ENCODE measurements at regions of chr14 and their contacts with region 1.

Region 1: GRCh38 chr14:22929104-22929847 is at the start of gene PRMT5:
- DNase-seq: peak; percentile 99
- H3K4me3 Mint-ChIP-seq: no peak within 1 kb of the TSS
- H3K27ac Mint-ChIP-seq: no peak within 1 kb of the TSS
- H3K4me1 Mint-ChIP-seq: peaks cover 25% of the 10 kb centered on the region
- H3K27me3 Mint-ChIP-seq: no peaks in the 10 kb centered on the region
- total RNA-seq, gene PRMT5: 198 and 200 TPM in 2 replicates

Region 2: DNA sequence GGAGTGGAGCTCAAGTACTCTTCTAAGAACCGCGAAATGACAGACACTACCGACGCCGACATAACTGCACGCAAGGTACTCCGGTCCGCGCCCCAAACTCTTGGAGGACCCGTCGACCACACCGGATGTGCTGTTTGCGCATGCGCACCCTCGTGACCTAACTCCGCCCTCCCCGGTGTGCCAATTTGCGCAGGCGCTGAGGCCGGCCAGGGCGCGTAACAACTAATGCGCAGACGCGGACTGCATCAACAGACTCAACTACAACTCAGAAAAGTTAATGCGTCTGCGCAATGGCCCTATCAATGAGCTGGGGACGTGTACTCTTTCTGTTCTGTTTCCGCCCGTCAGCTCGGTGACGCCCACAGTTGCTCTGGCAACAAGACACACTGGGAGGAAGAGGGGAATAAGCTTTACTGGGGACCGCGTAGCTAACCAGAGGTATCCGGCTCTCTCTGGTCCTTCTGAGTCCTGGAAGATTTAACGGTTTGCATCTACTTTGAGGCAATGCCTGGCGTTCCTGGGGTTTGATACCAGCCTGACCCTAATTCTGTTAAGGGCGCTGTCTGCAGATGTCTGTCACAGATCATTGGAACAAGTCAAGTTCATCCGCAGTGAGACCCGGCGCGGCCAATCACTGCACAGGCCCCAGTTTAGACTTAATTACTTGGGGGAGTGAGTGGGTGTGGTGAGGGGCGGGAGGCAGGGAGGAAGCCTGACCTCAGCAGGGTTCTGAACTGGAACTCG is 340.0 kb before region 1 on chr14 and contains the start of gene DAD1:
- intact Hi-C with region 1: loop called (anchors 1 kb)
- DNase-seq: peak; percentile 100
- H3K4me3 Mint-ChIP-seq: peak within 1 kb of the TSS; percentile 87
- H3K27ac Mint-ChIP-seq: peak within 1 kb of the TSS; percentile 99
- H3K4me1 Mint-ChIP-seq: peaks cover 49% of the 10 kb centered on the region
- H3K27me3 Mint-ChIP-seq: peaks cover 10% of the 10 kb centered on the region
- total RNA-seq, gene DAD1: 255 and 266 TPM in 2 replicates

Region 3: GRCh38 chr14:22918804-22919600 is 10.3 kb before region 1 on chr14 and contains the start of gene RBM23:
- intact Hi-C with region 1: loop called (anchors 1 kb)
- DNase-seq: peak; percentile 100
- H3K4me3 Mint-ChIP-seq: peak within 1 kb of the TSS; percentile 95
- H3K27ac Mint-ChIP-seq: peak within 1 kb of the TSS; percentile 100
- H3K4me1 Mint-ChIP-seq: peaks cover 27% of the 10 kb centered on the region
- H3K27me3 Mint-ChIP-seq: peaks cover 2% of the 10 kb centered on the region
- total RNA-seq, gene RBM23: 82.7 and 90.2 TPM in 2 replicates

Region 4: GRCh38 chr14:22973217-22974032 is 44.1 kb after region 1 on chr14:
- intact Hi-C with region 1: no loop called
- DNase-seq: peak; percentile 84
- H3K4me3 Mint-ChIP-seq: no peak overlapping the region
- H3K27ac Mint-ChIP-seq: no peak overlapping the region
- H3K4me1 Mint-ChIP-seq: no peaks in the 10 kb centered on the region
- H3K27me3 Mint-ChIP-seq: peaks cover 11% of the 10 kb centered on the region

Region 5: DNA sequence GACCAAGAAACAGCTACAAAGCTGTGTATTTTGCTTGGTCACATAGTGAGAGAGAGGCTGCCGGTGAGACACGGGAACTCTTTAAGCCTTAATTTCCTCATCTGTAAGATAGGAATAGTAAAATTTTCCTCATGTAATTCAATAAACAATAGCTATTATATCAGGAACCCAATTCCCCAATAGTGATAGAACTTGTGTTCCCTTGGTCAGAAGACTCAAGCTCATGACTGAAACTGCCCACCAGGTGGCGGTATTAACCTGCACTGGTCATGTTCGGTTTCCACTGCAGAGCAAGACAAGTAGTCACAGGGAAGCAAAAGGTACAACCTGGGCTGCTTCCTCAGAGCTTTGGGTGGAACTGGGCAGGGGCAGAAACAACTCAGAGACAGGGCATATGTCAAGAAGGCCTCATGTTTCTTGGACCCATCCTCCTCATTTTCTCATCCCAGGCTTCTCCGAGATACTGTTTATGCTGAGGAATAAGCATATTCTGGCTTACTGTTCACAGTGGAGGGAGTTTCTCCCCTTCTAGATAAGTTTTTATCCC is 57.3 kb after region 1 on chr14:
- intact Hi-C with region 1: loop called (anchors 1 kb)
- DNase-seq: peak; percentile 96
- H3K4me3 Mint-ChIP-seq: no peak overlapping the region
- H3K27ac Mint-ChIP-seq: no peak overlapping the region
- H3K4me1 Mint-ChIP-seq: no peaks in the 10 kb centered on the region
- H3K27me3 Mint-ChIP-seq: no peaks in the 10 kb centered on the region

Region 6: DNA sequence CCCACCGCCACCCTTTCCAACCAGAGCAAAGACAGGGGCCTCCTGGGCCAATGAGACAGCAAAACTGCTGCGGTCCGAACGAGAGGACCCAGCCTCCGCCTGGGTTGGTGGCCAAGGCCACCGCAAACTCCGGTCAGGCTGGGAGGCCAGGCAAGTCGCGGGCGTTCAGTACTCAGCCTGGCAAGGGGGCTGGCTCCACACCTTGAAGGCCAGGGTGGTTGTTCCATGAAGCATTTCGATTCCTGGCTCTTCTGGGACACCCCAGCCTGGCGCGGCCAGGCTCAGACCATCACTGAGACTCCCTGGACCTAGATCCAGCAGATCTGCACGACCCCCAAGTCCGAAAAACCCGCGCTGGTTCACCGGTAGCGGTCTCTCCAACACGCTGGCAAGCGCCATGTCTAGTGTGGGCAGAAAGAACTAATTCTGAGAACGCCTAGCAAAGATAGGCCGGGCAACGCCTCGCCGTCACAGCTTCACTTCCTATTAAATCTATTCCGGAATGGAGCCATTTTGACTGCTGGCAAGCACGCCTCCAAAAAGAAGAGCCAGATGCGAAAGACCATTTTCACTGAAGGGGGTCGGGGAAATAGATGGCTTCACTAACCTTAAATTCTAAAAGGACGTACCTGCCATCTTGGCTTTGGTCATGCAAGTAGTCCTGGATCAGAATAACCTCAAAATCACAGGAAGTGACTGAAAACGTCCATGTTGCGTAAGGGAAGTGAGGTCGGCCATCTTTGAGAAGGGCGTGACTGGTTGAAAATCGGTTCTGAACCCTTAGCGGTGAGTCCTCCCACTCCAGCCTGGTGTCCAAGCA is 105.4 kb after region 1 on chr14 and contains the start of gene PSMB5:
- intact Hi-C with region 1: loop called (anchors 2 kb)
- DNase-seq: peak; percentile 96
- H3K4me3 Mint-ChIP-seq: peak within 1 kb of the TSS; percentile 81
- H3K27ac Mint-ChIP-seq: peak within 1 kb of the TSS; percentile 88
- H3K4me1 Mint-ChIP-seq: peaks cover 24% of the 10 kb centered on the region
- H3K27me3 Mint-ChIP-seq: no peaks in the 10 kb centered on the region
- total RNA-seq, gene PSMB5: 150 TPM in 2 replicates

Region 7: DNA sequence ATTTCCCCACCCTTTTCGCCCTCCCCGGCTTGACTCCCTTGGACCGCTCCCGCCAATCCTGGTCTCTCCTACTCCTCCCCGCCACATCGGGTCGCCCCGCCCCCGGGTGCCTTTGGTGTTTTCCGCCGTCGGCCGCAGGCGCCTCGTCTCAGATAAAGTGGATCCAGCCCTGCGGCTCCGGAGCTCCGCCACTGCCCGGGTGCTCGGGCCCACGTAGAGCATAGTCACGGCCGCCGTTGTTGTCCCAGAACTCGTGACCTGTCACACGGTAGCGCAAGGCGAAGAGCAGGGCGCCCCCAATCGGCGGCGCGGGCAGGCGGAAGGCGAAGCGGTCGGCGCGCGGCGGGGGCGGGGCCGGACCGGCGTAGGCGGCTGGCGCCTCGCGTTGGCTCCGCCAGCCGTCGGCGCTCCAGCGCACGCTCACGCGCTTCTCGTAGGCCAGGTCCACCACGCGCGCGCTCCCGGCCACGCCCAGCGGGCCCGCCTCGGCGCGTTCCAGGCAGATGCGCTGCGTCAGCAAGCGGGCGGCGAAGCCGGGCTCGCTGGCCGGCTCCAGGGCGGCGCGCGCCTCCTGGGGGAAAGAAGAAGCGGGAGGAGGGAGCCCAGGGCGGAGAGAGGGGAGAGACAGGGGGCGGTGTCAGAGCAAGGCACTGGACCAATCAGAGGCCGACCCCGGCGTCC is 372.2 kb after region 1 on chr14:
- intact Hi-C with region 1: loop called (anchors 5 kb)
- DNase-seq: peak; percentile 100
- H3K4me3 Mint-ChIP-seq: peak overlapping the region; percentile 98
- H3K27ac Mint-ChIP-seq: peak overlapping the region; percentile 99
- H3K4me1 Mint-ChIP-seq: peaks cover 30% of the 10 kb centered on the region
- H3K27me3 Mint-ChIP-seq: peaks cover 6% of the 10 kb centered on the region

Measured in activated CD4-positive, alpha-beta T cell treated with anti-CD3 and anti-CD28 coated beads, Interleukin-2, amount 10 ng/mL, durations not matched to agents 24 days and 14 days (primary cell).